ENCODE measurements at regions of chr1 and their contacts with region 1.

Region 1: GRCh38 chr1:154335025-154335714 is 9.8 kb downstream of the ATP8B2 start:
- DNase-seq: peak; percentile 90 to 95
- H3K4me3 ChIP-seq: peak overlapping the region in 1 of 4 donors; percentile 9
- H3K27ac ChIP-seq: peak overlapping the region; percentile 23 to 83 (median 77)
- H3K4me1 ChIP-seq: peaks cover 8 to 61% (median 20%) of the 10 kb centered on the region in 4 donors
- H3K27me3 ChIP-seq: no peaks in the 10 kb centered on the region
- CTCF ChIP-seq: peak in 5 of 7 experiments; percentile 71 to 95 (median 84)
- EP300 ChIP-seq: no peak
- POLR2A ChIP-seq: no peak

Region 2: GRCh38 chr1:154272217-154272998 is 62.8 kb before region 1 on chr1 and contains the start of gene HAX1:
- intact Hi-C with region 1: loop called (anchors 10 kb)
- DNase-seq: peak; percentile 95 to 98
- H3K4me3 ChIP-seq: peak within 1 kb of the TSS; percentile 72 to 85 (median 76)
- H3K27ac ChIP-seq: peak within 1 kb of the TSS; percentile 84 to 94 (median 91)
- H3K4me1 ChIP-seq: peaks cover 6 to 29% (median 21%) of the 10 kb centered on the region in 4 donors
- H3K27me3 ChIP-seq: no peaks in the 10 kb centered on the region
- CTCF ChIP-seq: peak in 5 of 7 experiments; percentile 59 to 94 (median 70)
- EP300 ChIP-seq: no peak
- POLR2A ChIP-seq: peak in 1 of 4 donors; percentile 35
- total RNA-seq, gene HAX1: 36.2 to 167 (median 61.0) TPM

Region 3: GRCh38 chr1:154386643-154387352 is 51.6 kb after region 1 on chr1:
- intact Hi-C with region 1: no loop called
- DNase-seq: peak in 1 of 2 donors; percentile 53
- H3K4me3 ChIP-seq: no peak overlapping the region
- H3K27ac ChIP-seq: peak overlapping the region in 1 of 5 donors; percentile 42
- H3K4me1 ChIP-seq: peaks cover 0 to 16% (median 2%) of the 10 kb centered on the region in 4 donors
- H3K27me3 ChIP-seq: no peaks in the 10 kb centered on the region
- CTCF ChIP-seq: no peak
- EP300 ChIP-seq: no peak
- POLR2A ChIP-seq: no peak

Measured in stomach (tissue), 19 donors.